ENCODE measurements at regions of chr5 and their contacts with region 1.

Region 1: GRCh38 chr5:111254613-111255012 is 30.4 kb downstream of the CAMK4 start:
- DNase-seq: peak; percentile 75
- H3K4me3 Mint-ChIP-seq: peak overlapping the region; percentile 16
- H3K27ac Mint-ChIP-seq: peak overlapping the region; percentile 74
- H3K4me1 Mint-ChIP-seq: peaks cover 75% of the 10 kb centered on the region
- H3K27me3 Mint-ChIP-seq: no peaks in the 10 kb centered on the region

Region 2: DNA sequence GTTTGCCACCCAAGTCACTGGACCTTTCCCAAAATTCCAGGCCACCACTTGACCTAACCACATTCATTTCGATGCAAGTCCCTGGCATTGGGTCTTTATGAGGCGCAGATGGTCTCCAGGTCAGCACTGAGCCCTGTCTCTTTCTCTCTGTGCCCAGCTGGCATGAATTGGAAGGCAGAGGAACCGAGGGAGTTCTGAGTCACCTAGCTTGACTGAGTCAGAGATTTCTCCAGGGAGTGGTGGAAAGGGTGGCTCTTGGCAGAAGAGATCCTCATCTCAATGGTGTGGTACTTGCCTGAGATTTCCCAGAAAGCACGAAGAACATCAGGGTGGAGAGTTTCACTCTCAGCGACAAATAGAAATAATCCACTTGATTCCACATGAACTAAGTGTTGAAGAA is 118.7 kb before region 1 on chr5:
- intact Hi-C with region 1: no loop called
- DNase-seq: no peak
- H3K4me3 Mint-ChIP-seq: no peak overlapping the region
- H3K27ac Mint-ChIP-seq: no peak overlapping the region
- H3K4me1 Mint-ChIP-seq: peaks cover 16% of the 10 kb centered on the region
- H3K27me3 Mint-ChIP-seq: no peaks in the 10 kb centered on the region

Region 3: DNA sequence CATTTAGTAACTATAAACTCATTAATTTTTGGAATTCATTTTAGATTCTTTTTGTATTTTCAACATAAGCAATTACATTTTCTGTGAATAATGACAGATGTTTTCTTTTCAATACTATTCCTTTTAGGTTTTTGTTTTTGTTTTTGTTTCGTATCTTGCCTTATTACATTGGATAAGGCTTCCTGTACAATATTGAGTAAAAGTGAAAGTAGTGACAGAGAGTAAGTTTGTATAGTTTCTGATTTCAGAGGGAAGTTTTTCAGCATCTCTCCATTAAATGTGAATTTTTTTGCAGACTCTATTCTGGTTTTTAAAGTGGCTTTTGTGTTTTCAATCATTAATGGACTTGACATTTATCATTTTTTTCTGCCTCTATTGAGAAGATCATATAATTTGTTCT is 43.3 kb before region 1 on chr5:
- intact Hi-C with region 1: loop called (anchors 1 kb)
- DNase-seq: no peak
- H3K4me3 Mint-ChIP-seq: no peak overlapping the region
- H3K27ac Mint-ChIP-seq: peak overlapping the region; percentile 27
- H3K4me1 Mint-ChIP-seq: peaks cover 36% of the 10 kb centered on the region
- H3K27me3 Mint-ChIP-seq: peaks cover 2% of the 10 kb centered on the region

Region 4: GRCh38 chr5:111229871-111230810 is 24.5 kb before region 1 on chr5:
- intact Hi-C with region 1: loop called (anchors 1 kb)
- DNase-seq: no peak
- H3K4me3 Mint-ChIP-seq: peak overlapping the region; percentile 79
- H3K27ac Mint-ChIP-seq: peak overlapping the region; percentile 96
- H3K4me1 Mint-ChIP-seq: peaks cover 97% of the 10 kb centered on the region
- H3K27me3 Mint-ChIP-seq: no peaks in the 10 kb centered on the region

Region 5: GRCh38 chr5:111271885-111272284 is 17.3 kb after region 1 on chr5:
- intact Hi-C with region 1: loop called (anchors 1 kb)
- DNase-seq: no peak
- H3K4me3 Mint-ChIP-seq: no peak overlapping the region
- H3K27ac Mint-ChIP-seq: peak overlapping the region; percentile 65
- H3K4me1 Mint-ChIP-seq: peaks cover 23% of the 10 kb centered on the region
- H3K27me3 Mint-ChIP-seq: no peaks in the 10 kb centered on the region

Region 6: GRCh38 chr5:111337688-111338087 is 83.1 kb after region 1 on chr5:
- intact Hi-C with region 1: loop called (anchors 1 kb)
- DNase-seq: no peak
- H3K4me3 Mint-ChIP-seq: no peak overlapping the region
- H3K27ac Mint-ChIP-seq: peak overlapping the region; percentile 61
- H3K4me1 Mint-ChIP-seq: peaks cover 11% of the 10 kb centered on the region
- H3K27me3 Mint-ChIP-seq: no peaks in the 10 kb centered on the region

Region 7: DNA sequence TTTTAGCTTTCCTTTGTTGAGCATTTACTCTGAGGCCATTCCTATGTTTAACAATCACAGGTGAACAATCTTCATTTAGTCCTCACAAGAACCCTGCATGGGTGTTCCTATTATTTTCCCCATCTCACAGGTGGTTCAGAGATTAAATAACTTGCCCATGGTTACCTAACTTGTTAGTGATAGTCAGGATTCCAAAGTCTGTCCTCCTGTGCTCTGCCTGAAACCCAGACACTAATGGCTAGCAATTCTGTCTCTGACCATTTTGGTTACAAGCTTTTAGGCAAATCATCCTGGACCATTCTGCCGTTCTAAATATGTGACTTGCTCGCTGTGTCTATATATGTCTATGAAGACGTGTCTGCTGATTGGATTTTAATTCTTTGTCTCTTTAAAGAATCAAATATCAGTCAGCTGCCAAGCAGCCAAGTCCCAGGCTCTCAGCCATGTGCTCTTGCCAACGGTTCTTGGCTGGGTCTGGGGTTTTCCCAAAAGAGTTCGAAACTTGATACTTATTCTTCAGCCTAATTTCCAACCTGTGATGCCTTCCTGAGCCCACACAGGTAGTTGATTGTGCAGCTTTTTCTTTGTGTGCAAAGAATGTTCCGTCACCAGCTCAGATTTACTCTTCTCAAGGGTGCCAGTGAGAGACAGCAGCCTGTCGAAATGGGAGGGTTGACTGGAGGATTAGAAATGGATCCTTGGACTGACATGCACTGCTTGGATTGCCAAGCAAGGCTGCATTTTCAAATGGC is 380.7 kb after region 1 on chr5:
- intact Hi-C with region 1: no loop called
- DNase-seq: no peak
- H3K4me3 Mint-ChIP-seq: no peak overlapping the region
- H3K27ac Mint-ChIP-seq: no peak overlapping the region
- H3K4me1 Mint-ChIP-seq: no peaks in the 10 kb centered on the region
- H3K27me3 Mint-ChIP-seq: no peaks in the 10 kb centered on the region

Measured in activated T-helper 1 cell treated with anti-CD3 and anti-CD28 coated beads, Interleukin-12 subunit alpha, Interleukin-12 subunit beta, Interleukin-2, Interleukin-4 antibody, amounts not matched to agents 30 ng/mL and 10 ng/mL and 1 ng/mL, durations not matched to agents 14 hours and 24 hours and 36 hours (primary cell).